ENCODE measurements at regions of chr6 and their contacts with region 1.

Region 1: GRCh38 chr6:159017757-159018559 is 18.0 kb upstream of the RSPH3 start:
- DNase-seq: no peak
- ATAC-seq: peak; percentile 85
- H3K4me3 Mint-ChIP-seq: peak overlapping the region; percentile 14
- H3K27ac Mint-ChIP-seq: peak overlapping the region; percentile 96
- H3K4me1 Mint-ChIP-seq: peaks cover 68% of the 10 kb centered on the region
- H3K27me3 Mint-ChIP-seq: no peaks in the 10 kb centered on the region
- CTCF ChIP-seq: no peak

Region 2: GRCh38 chr6:158649289-158650143 is 368.4 kb before region 1 on chr6 and contains the start of gene SYTL3:
- CTCF ChIA-PET with region 1: no interaction called
- POLR2A ChIA-PET with region 1: no interaction called
- intact Hi-C with region 1: no loop called
- DNase-seq: peak; percentile 94
- ATAC-seq: peak; percentile 60
- H3K4me3 Mint-ChIP-seq: peak within 1 kb of the TSS; percentile 83
- H3K27ac Mint-ChIP-seq: peak within 1 kb of the TSS; percentile 97
- H3K4me1 Mint-ChIP-seq: peaks cover 68% of the 10 kb centered on the region
- H3K27me3 Mint-ChIP-seq: peaks cover 2% of the 10 kb centered on the region
- CTCF ChIP-seq: no peak
- total RNA-seq, gene SYTL3: 151 to 163 TPM

Region 3: DNA sequence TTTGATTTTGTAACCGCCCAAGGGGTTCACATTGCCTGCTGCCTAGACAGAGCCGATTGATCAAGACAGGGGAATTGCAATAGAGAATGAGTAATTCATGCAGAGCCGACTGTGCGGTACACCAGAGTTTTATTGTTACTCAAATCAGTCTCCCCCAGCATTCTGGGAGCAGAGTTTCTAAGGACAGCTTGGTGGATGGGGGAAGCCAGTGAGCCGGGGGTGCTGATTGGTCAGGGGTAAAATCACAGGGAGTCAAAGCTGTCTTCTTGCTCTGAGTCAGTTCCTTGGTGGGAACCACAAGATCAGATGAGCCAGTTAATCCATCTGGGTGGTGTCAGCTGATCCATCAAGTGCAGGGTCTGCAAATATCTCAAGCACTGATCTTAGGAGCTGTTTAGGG is 138.8 kb before region 1 on chr6:
- CTCF ChIA-PET with region 1: no interaction called
- POLR2A ChIA-PET with region 1: no interaction called
- intact Hi-C with region 1: no loop called
- DNase-seq: peak; percentile 83
- ATAC-seq: peak; percentile 98
- H3K4me3 Mint-ChIP-seq: no peak overlapping the region
- H3K27ac Mint-ChIP-seq: no peak overlapping the region
- H3K4me1 Mint-ChIP-seq: peaks cover 12% of the 10 kb centered on the region
- H3K27me3 Mint-ChIP-seq: no peaks in the 10 kb centered on the region
- CTCF ChIP-seq: no peak

Region 4: GRCh38 chr6:158999666-159000403 is 18.1 kb before region 1 on chr6 and contains the start of gene RSPH3:
- CTCF ChIA-PET with region 1: interaction called, 9 read pairs
- POLR2A ChIA-PET with region 1: interaction called, 13 read pairs
- intact Hi-C with region 1: no loop called
- DNase-seq: peak; percentile 96
- ATAC-seq: peak; percentile 89
- H3K4me3 Mint-ChIP-seq: peak within 1 kb of the TSS; percentile 83
- H3K27ac Mint-ChIP-seq: peak within 1 kb of the TSS; percentile 81
- H3K4me1 Mint-ChIP-seq: peaks cover 42% of the 10 kb centered on the region
- H3K27me3 Mint-ChIP-seq: no peaks in the 10 kb centered on the region
- CTCF ChIP-seq: no peak
- total RNA-seq, gene RSPH3: 4.2 TPM

Region 5: GRCh38 chr6:159098636-159099106 is 80.7 kb after region 1 on chr6:
- CTCF ChIA-PET with region 1: interaction called, 506 read pairs
- POLR2A ChIA-PET with region 1: interaction called, 5 read pairs
- intact Hi-C with region 1: no loop called
- DNase-seq: peak; percentile 84
- ATAC-seq: peak; percentile 43
- H3K4me3 Mint-ChIP-seq: peak overlapping the region; percentile 69
- H3K27ac Mint-ChIP-seq: peak overlapping the region; percentile 96
- H3K4me1 Mint-ChIP-seq: peaks cover 93% of the 10 kb centered on the region
- H3K27me3 Mint-ChIP-seq: no peaks in the 10 kb centered on the region
- CTCF ChIP-seq: no peak